T-cell (primary cell): ENCODE measurements at regions of chr2 and their contacts with region 1.

Region 1: DNA sequence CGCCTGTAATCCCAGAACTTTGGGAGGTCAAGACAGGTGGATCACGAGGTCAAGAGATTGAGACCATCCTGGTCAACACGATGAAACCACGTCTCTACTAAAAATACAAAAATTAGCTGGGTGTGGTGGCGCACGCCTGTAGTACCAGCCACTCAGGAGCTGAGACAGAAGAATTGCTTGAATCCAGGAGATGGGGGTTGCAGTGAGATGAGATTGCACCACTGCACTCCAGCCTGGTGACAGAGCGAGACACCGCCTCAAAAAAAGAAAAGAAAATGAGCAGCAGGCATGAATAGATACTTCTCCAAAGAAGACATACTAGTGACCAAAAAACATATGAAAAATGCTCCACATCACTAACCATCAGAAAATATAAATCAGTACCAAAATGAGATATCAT is 138.6 kb downstream of the DNAH7 start:
- DNase-seq: no peak
- ATAC-seq: no peak
- H3K4me3 ChIP-seq: no peak overlapping the region
- H3K4me3 Mint-ChIP-seq: no peak overlapping the region
- H3K27ac ChIP-seq: no peak overlapping the region
- H3K27ac Mint-ChIP-seq: no peak overlapping the region
- H3K4me1 ChIP-seq: no peaks in the 10 kb centered on the region
- H3K4me1 Mint-ChIP-seq: no peaks in the 10 kb centered on the region
- H3K27me3 ChIP-seq: no peaks in the 10 kb centered on the region
- H3K27me3 Mint-ChIP-seq: no peaks in the 10 kb centered on the region

Region 2: DNA sequence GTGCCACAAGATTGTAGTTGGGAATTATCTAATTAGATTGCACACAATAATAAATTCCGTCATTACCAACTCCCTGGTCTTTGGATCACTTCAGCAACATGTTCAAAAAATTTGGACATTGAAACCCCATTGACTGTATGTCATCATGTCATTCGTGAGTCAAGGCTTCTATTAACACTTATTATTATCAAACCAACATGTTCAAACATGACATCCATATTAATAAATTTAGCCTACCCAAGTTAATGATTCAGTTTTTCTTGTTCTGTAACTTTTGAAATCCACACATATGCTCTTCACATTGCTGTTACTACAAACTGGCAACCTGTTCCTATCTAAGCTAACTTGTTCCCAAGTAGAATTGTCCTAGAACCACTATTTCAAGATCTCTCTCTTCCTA is 1415.8 kb before region 1 on chr2:
- CTCF ChIA-PET with region 1: no interaction called
- POLR2A ChIA-PET with region 1: interaction called in 1 of 2 experiments, 12 read pairs
- DNase-seq: no peak
- ATAC-seq: no peak
- H3K4me3 ChIP-seq: no peak overlapping the region
- H3K4me3 Mint-ChIP-seq: no peak overlapping the region
- H3K27ac ChIP-seq: no peak overlapping the region
- H3K27ac Mint-ChIP-seq: no peak overlapping the region
- H3K4me1 ChIP-seq: no peaks in the 10 kb centered on the region
- H3K4me1 Mint-ChIP-seq: no peaks in the 10 kb centered on the region
- H3K27me3 ChIP-seq: no peaks in the 10 kb centered on the region
- H3K27me3 Mint-ChIP-seq: no peaks in the 10 kb centered on the region

Region 3: DNA sequence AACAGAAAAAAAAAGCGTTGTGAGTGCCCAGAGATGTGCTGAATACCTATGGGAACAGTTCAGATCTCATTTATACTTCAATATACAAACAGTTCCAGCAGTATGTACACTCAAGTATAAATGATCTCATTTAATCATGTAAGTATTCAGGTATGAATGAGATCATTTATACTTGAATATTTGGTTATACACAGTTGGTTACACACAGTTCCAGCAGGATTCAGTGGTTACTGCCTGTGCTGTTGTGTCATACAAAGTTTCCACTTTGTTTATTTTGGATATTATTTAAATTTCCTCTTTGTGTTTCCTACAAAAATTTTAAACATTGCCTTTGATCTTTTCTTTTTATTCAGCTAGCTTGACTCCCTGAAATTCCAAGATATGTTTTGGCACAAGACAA is 566.6 kb before region 1 on chr2:
- CTCF ChIA-PET with region 1: no interaction called
- POLR2A ChIA-PET with region 1: no interaction called
- DNase-seq: no peak
- ATAC-seq: no peak
- H3K4me3 ChIP-seq: no peak overlapping the region
- H3K4me3 Mint-ChIP-seq: no peak overlapping the region
- H3K27ac ChIP-seq: no peak overlapping the region
- H3K27ac Mint-ChIP-seq: no peak overlapping the region
- H3K4me1 ChIP-seq: peaks cover 0 to 3% of the 10 kb centered on the region in 2 experiments
- H3K4me1 Mint-ChIP-seq: peaks cover 10 to 13% (median 10%) of the 10 kb centered on the region in 3 donors
- H3K27me3 ChIP-seq: no peaks in the 10 kb centered on the region
- H3K27me3 Mint-ChIP-seq: no peaks in the 10 kb centered on the region

Region 4: GRCh38 chr2:195520671-195521155 is 409.4 kb before region 1 on chr2:
- CTCF ChIA-PET with region 1: no interaction called
- POLR2A ChIA-PET with region 1: no interaction called
- DNase-seq: no peak
- ATAC-seq: no peak
- H3K4me3 ChIP-seq: no peak overlapping the region
- H3K4me3 Mint-ChIP-seq: no peak overlapping the region
- H3K27ac ChIP-seq: no peak overlapping the region
- H3K27ac Mint-ChIP-seq: no peak overlapping the region
- H3K4me1 ChIP-seq: no peaks in the 10 kb centered on the region
- H3K4me1 Mint-ChIP-seq: peaks cover 41 to 50% (median 42%) of the 10 kb centered on the region in 3 donors
- H3K27me3 ChIP-seq: no peaks in the 10 kb centered on the region
- H3K27me3 Mint-ChIP-seq: no peaks in the 10 kb centered on the region